Posterior vena cava (tissue), 2 donors: ENCODE measurements at regions of chr6 and their contacts with region 1.

Region 1: DNA sequence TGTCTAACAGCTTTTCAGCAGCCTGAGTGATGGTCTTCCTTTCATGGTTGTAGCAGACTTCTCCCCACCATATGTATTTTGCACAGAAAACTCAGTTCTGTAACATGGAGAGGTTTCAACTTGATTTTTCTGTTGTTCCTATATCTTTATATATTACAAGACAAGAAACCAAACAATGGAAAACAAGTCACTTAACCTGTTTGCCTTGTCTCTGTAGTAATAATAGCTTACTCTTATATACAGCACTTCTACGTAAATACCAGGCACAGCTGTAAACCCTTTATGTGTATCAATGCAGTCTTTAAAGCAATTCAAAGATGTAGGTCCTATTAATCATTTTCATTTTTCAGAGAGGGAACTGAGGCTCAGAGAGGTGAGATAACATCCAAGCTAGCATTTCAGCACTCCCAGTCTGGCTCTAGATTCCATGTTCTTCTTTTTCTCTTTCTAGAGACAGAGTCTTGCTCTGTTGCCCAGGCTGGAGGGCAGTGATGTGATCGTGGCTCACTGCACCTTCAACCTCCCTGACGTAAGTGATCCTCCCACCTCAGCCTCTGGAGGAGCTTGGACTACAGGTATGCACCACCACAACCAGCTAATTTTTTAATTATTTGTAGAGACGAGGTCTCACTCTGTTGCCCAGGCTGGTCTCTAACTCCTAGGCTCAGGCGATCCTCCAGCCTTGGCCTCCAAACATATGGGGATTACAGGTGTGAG is 90.4 kb downstream of the DTNBP1 start:
- DNase-seq: no peak

Region 2: DNA sequence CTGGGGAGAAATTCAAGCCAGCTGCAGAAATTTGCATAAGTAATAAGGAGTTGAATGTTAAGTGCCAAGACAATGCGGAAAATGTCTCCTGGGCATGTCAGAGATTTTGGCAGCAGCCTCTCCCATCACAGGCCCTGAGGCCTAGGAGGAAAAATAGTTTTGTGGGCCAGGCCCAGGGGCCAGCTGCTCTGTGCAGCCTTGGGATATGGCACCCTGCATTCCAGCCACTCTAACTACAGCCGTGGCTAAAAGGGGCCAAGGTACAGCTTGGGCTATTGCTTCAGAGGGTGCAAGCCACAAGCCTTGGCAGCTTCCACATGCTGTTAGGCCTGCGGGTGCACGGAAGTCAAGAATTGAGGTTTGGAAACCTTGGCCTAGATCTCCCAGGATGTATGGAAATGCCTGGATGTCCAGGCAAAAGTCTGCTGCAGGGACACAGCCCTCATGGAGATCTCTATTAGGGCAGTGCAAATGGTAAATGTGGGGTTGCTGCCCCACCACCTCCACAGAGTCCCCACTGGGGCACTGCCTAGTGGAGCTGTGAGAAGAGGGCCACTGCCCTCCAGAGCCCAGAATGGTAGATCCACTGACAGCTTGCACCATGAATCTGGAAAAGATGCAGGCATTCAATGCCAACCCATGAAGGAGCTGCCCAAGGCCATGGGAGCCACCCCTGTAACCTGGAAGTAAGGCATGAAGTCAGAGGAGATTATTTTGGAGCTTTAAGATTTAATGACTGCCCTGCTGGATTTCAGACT is 36.1 kb before region 1 on chr6:
- intact Hi-C with region 1: loop called in 1 of 2 experiments (anchors 1 kb)
- DNase-seq: no peak

Region 3: GRCh38 chr6:16803294-16804200 is 1231.1 kb after region 1 on chr6:
- intact Hi-C with region 1: no loop called
- DNase-seq: no peak